ENCODE measurements at regions of chr12 and their contacts with region 1.

Region 1: DNA sequence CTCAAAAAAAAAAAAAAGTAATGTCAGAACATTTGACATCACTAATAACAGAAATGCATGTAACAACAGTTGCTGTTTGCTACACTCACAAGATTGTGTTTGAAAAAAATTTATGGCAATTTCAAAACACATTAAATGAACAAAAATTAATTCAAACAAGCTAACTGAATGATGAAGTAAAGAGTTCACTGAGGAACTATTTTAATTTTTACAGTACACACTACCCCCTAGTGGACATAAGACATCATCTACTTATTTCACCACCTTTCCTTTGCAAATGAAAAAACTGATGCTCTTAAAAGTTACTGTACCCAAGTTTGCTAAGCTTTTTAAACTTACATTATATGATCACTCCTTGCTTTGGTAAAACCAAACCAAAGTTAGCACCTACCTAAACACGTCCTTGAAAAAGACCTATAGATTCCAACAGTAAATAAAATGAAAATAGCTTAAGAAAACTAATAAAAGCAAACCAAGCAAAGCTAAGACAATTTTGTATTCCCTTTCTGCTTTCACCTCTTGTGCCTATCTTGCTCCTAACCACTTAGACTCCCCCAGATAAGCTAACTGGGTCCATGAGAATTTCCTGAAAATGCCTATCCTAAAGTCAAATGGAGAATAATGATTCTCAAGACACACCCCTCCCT is 22.2 kb downstream of the UBE2N start:
- DNase-seq: peak in 4 of 5 donors; percentile 41 to 55 (median 48)
- H3K4me3 ChIP-seq: no peak overlapping the region
- H3K4me3 Mint-ChIP-seq: peak overlapping the region in 3 of 8 donors; percentile 8 to 21 (median 19)
- H3K27ac ChIP-seq: no peak overlapping the region
- H3K27ac Mint-ChIP-seq: peak overlapping the region; percentile 39 to 89 (median 76)
- H3K4me1 ChIP-seq: peaks cover 80% of the 10 kb centered on the region
- H3K4me1 Mint-ChIP-seq: peaks cover 62 to 93% (median 80%) of the 10 kb centered on the region in 4 donors
- H3K27me3 ChIP-seq: no peaks in the 10 kb centered on the region
- H3K27me3 Mint-ChIP-seq: no peaks in the 10 kb centered on the region

Region 2: GRCh38 chr12:92987362-92987761 is 432.1 kb before region 1 on chr12:
- CTCF ChIA-PET with region 1: interaction called, 74 read pairs
- POLR2A ChIA-PET with region 1: no interaction called
- intact Hi-C with region 1: loop called (anchors 1 kb)
- DNase-seq: peak in 4 of 5 donors; percentile 52 to 61 (median 57)
- H3K4me3 ChIP-seq: no peak overlapping the region
- H3K4me3 Mint-ChIP-seq: peak overlapping the region in 3 of 8 donors; percentile 27 to 33 (median 30)
- H3K27ac ChIP-seq: no peak overlapping the region
- H3K27ac Mint-ChIP-seq: peak overlapping the region in 1 of 7 donors; percentile 9
- H3K4me1 ChIP-seq: peaks cover 7% of the 10 kb centered on the region
- H3K4me1 Mint-ChIP-seq: peaks cover 8 to 11% (median 9%) of the 10 kb centered on the region in 4 donors
- H3K27me3 ChIP-seq: no peaks in the 10 kb centered on the region
- H3K27me3 Mint-ChIP-seq: no peaks in the 10 kb centered on the region

Region 3: GRCh38 chr12:93378373-93379325 is 40.9 kb before region 1 on chr12:
- CTCF ChIA-PET with region 1: interaction called, 12 read pairs
- POLR2A ChIA-PET with region 1: no interaction called
- intact Hi-C with region 1: no loop called
- DNase-seq: peak; percentile 63 to 73 (median 69)
- H3K4me3 ChIP-seq: peak overlapping the region; percentile 71 to 88
- H3K4me3 Mint-ChIP-seq: peak overlapping the region; percentile 98 to 100 (median 99)
- H3K27ac ChIP-seq: peak overlapping the region; percentile 84
- H3K27ac Mint-ChIP-seq: peak overlapping the region; percentile 96 to 100 (median 99)
- H3K4me1 ChIP-seq: peaks cover 43% of the 10 kb centered on the region
- H3K4me1 Mint-ChIP-seq: peaks cover 28 to 57% (median 43%) of the 10 kb centered on the region in 4 donors
- H3K27me3 ChIP-seq: no peaks in the 10 kb centered on the region
- H3K27me3 Mint-ChIP-seq: no peaks in the 10 kb centered on the region

Region 4: GRCh38 chr12:93407054-93407962 is 12.2 kb before region 1 on chr12:
- CTCF ChIA-PET with region 1: interaction called, 42 read pairs
- POLR2A ChIA-PET with region 1: no interaction called
- intact Hi-C with region 1: no loop called
- DNase-seq: no peak
- H3K4me3 ChIP-seq: no peak overlapping the region
- H3K4me3 Mint-ChIP-seq: no peak overlapping the region
- H3K27ac ChIP-seq: no peak overlapping the region
- H3K27ac Mint-ChIP-seq: peak overlapping the region; percentile 22 to 67 (median 52)
- H3K4me1 ChIP-seq: peaks cover 15% of the 10 kb centered on the region
- H3K4me1 Mint-ChIP-seq: peaks cover 18 to 20% (median 18%) of the 10 kb centered on the region in 4 donors
- H3K27me3 ChIP-seq: no peaks in the 10 kb centered on the region
- H3K27me3 Mint-ChIP-seq: no peaks in the 10 kb centered on the region

Region 5: DNA sequence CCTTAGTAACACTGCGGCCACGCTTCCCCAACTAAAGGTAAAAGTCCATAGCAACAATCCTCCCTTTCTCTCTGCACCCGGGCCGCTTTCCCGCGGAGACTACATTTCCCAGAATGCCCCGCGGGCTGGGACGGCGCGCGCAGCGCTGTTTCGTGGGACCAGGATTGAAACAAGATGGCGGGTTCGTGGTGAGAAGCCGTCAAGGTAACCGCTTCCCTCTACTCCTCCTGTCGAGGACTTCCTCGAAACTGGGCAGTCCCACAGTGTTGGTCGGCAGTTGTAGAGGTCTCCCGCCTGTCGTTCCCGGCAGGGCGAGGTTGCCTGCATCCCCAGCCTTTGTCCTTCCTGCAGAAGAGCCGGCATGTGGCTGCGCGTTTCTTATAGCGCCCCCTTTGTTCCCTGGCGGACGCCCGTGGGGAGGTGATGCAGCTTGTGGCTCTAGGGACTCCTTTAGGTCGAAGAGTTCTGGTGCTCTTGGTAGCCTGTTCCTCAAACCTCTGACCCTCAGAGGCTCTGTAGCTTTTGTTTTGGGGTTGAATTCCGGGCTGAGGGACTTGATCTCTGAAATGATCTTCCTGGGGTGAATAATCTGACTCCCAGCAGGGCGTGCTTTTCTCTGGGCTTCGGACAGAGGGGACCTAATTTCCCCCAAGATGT is 48.0 kb after region 1 on chr12 and contains the start of gene MRPL42:
- CTCF ChIA-PET with region 1: interaction called, 13 read pairs
- POLR2A ChIA-PET with region 1: no interaction called
- intact Hi-C with region 1: loop called (anchors 1 kb)
- DNase-seq: peak; percentile 91 to 96 (median 92)
- H3K4me3 ChIP-seq: peak within 1 kb of the TSS; percentile 72 to 81
- H3K4me3 Mint-ChIP-seq: peak within 1 kb of the TSS; percentile 88 to 95 (median 92)
- H3K27ac ChIP-seq: peak within 1 kb of the TSS; percentile 82
- H3K27ac Mint-ChIP-seq: peak within 1 kb of the TSS; percentile 92 to 99 (median 96)
- H3K4me1 ChIP-seq: peaks cover 28% of the 10 kb centered on the region
- H3K4me1 Mint-ChIP-seq: peaks cover 24 to 38% (median 32%) of the 10 kb centered on the region in 4 donors
- H3K27me3 ChIP-seq: no peaks in the 10 kb centered on the region
- H3K27me3 Mint-ChIP-seq: no peaks in the 10 kb centered on the region
- total RNA-seq, gene MRPL42: 40.1 to 43.2 TPM

Region 6: GRCh38 chr12:93484315-93484981 is 64.9 kb after region 1 on chr12:
- CTCF ChIA-PET with region 1: no interaction called
- POLR2A ChIA-PET with region 1: no interaction called
- intact Hi-C with region 1: no loop called
- DNase-seq: no peak
- H3K4me3 ChIP-seq: no peak overlapping the region
- H3K4me3 Mint-ChIP-seq: no peak overlapping the region
- H3K27ac ChIP-seq: no peak overlapping the region
- H3K27ac Mint-ChIP-seq: no peak overlapping the region
- H3K4me1 ChIP-seq: no peaks in the 10 kb centered on the region
- H3K4me1 Mint-ChIP-seq: peaks cover 0 to 4% (median 2%) of the 10 kb centered on the region in 4 donors
- H3K27me3 ChIP-seq: no peaks in the 10 kb centered on the region
- H3K27me3 Mint-ChIP-seq: no peaks in the 10 kb centered on the region

Measured in CD4-positive, alpha-beta memory T cell (primary cell).